HepG2 (cell line): ENCODE measurements at regions of chr11 and their contacts with region 1.

Region 1: GRCh38 chr11:114439229-114440120 is at the start of gene REXO2:
- DNase-seq: peak; percentile 90
- ATAC-seq: peak; percentile 97
- H3K4me3 ChIP-seq: peak within 1 kb of the TSS; percentile 84 to 100 (median 88)
- H3K27ac ChIP-seq: peak within 1 kb of the TSS; percentile 61
- H3K4me1 ChIP-seq: peaks cover 33% of the 10 kb centered on the region
- H3K27me3 ChIP-seq: no peaks in the 10 kb centered on the region; a peak in 1 of 5 replicates
- CTCF ChIP-seq: peak; percentile 66
- EP300 ChIP-seq: no peak; a peak in 1 of 4 replicates
- POLR2A ChIP-seq: peak; percentile 66 to 76
- RAD21 ChIP-seq: no peak
- total RNA-seq, gene REXO2: 104 and 111 TPM in 2 replicates

Region 2: DNA sequence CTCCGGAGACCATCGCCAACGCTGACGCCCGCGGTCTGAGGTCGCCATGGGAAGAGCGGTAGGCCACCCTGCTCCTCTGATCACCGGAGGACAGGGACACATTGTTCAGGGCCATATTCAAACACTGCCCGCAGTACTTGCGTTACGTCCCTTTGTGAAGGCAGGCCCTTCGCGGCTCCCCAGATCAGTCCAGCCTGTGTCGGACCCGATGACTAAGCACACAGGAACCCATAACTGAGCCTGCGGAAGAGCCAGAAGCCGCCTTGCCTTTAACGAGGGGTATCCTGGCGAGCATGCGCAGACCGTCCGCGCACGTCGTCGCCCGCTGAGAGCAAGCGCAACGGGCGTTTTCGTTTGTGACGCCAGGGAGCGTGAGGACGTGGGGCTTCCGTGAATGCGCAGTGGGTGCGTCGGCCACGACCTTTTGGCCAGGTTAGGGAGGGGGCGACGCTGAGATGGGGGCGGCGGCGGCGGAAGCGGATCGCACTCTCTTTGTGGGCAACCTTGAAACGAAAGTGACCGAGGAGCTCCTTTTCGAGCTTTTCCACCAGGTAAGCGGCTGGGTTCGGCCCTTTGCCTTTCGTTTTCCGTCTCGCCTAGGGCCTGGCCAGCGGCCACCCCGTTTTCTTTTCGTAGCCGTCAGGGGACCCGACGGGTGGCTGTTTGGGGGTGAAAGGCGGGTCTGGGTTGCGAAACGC is 39.1 kb before region 1 on chr11 and contains the starts of genes C11orf71 and RBM7:
- CTCF ChIA-PET with region 1: no interaction called
- POLR2A ChIA-PET with region 1: interaction called, 17 read pairs
- in situ Hi-C with region 1: no loop called
- intact Hi-C with region 1: loop called (anchors 1 kb)
- DNase-seq: peak; percentile 96
- ATAC-seq: peak; percentile 97
- H3K4me3 ChIP-seq: peak within 1 kb of the TSS; percentile 97 to 99 (median 98)
- H3K27ac ChIP-seq: peak within 1 kb of the TSS; percentile 98
- H3K4me1 ChIP-seq: peaks cover 45% of the 10 kb centered on the region
- H3K27me3 ChIP-seq: peaks cover 0 to 3% of the 10 kb centered on the region in 2 experiments; a peak in 1 of 5 replicates
- CTCF ChIP-seq: 0 out of 2 replicates have a peak, but pooled peaks have one; percentile 40
- EP300 ChIP-seq: peak in 1 of 2 experiments; percentile 4; a peak in 1 of 4 replicates
- POLR2A ChIP-seq: peak; percentile 97 to 98
- RAD21 ChIP-seq: no peak
- total RNA-seq, gene C11orf71: 7.1 and 9.4 TPM in 2 replicates
- total RNA-seq, gene RBM7: 30.5 and 52.6 TPM in 2 replicates